ENCODE measurements at regions of chr3 and their contacts with region 1.

Region 1: DNA sequence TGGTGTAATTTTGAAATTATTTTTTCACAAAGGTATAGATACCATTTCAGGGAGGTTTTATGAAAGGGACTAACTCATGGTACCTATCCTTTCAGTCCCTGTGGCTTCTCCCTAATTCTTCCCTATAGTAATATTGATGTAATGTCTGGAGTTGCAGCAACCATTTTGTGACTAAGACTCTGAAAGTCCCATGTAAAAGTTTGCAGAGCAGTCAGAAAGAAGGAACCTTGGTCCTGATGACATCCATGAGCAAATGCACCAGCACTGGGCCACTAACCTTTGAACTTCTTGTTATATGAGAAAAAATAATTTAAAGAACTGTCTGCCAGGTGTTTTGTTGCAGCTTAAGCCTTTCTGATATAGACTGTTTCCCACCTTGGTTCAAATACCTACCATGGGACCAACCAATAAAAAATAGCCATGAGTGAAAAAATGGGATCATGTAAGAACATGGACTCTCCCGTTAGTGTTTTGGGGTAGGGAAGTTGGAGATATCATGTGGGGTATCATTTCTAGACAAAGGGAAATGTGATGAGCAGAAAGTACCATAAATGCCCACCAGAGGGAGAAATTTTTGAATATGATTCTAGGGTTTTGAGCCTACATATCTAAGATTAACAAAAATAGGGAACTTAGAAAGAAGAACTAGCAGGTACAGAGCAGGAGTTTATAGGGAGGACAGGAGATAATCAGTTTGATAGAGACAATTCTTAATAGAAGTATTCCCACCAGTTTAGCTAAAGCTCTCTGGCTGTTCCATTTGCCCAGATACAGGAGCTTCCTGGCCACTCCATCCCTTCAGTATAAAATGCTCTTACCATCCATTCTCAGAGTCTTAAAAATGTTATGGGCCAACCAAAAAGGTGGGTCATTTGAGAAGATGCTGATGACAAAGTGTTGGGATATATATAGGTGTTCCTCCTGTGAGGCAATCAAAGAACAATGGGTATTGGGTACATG is 3.4 kb upstream of the CPOX start:
- DNase-seq: no peak
- H3K4me3 ChIP-seq: no peak overlapping the region
- H3K27ac ChIP-seq: no peak overlapping the region
- H3K4me1 ChIP-seq: peaks cover 4% of the 10 kb centered on the region
- H3K27me3 ChIP-seq: no peaks in the 10 kb centered on the region
- CTCF ChIP-seq: no peak
- EP300 ChIP-seq: no peak
- POLR2A ChIP-seq: no peak

Region 2: GRCh38 chr3:98645039-98645438 is 48.2 kb after region 1 on chr3:
- intact Hi-C with region 1: no loop called
- DNase-seq: no peak
- H3K4me3 ChIP-seq: no peak overlapping the region
- H3K27ac ChIP-seq: no peak overlapping the region
- H3K4me1 ChIP-seq: no peaks in the 10 kb centered on the region
- H3K27me3 ChIP-seq: no peaks in the 10 kb centered on the region
- CTCF ChIP-seq: no peak
- EP300 ChIP-seq: no peak
- POLR2A ChIP-seq: no peak

Region 3: GRCh38 chr3:98817547-98818041 is 220.8 kb after region 1 on chr3:
- intact Hi-C with region 1: loop called in 1 of 4 experiments (anchors 5 kb)
- DNase-seq: no peak
- H3K4me3 ChIP-seq: no peak overlapping the region
- H3K27ac ChIP-seq: no peak overlapping the region
- H3K4me1 ChIP-seq: no peaks in the 10 kb centered on the region
- H3K27me3 ChIP-seq: no peaks in the 10 kb centered on the region
- CTCF ChIP-seq: peak; percentile 42 to 64 (median 62)
- EP300 ChIP-seq: no peak
- POLR2A ChIP-seq: no peak